ENCODE measurements at regions of chr12 and their contacts with region 1.

Region 1: GRCh38 chr12:76790564-76791552 is 26.9 kb downstream of the ZDHHC17 start:
- DNase-seq: no peak
- H3K4me3 Mint-ChIP-seq: no peak overlapping the region
- H3K27ac Mint-ChIP-seq: no peak overlapping the region
- H3K4me1 Mint-ChIP-seq: peaks cover 15% of the 10 kb centered on the region
- H3K27me3 Mint-ChIP-seq: no peaks in the 10 kb centered on the region

Region 2: GRCh38 chr12:76480796-76481195 is 310.1 kb before region 1 on chr12:
- CTCF ChIA-PET with region 1: no interaction called
- intact Hi-C with region 1: no loop called
- DNase-seq: no peak
- H3K4me3 Mint-ChIP-seq: no peak overlapping the region
- H3K27ac Mint-ChIP-seq: no peak overlapping the region
- H3K4me1 Mint-ChIP-seq: peaks cover 9% of the 10 kb centered on the region
- H3K27me3 Mint-ChIP-seq: no peaks in the 10 kb centered on the region

Region 3: DNA sequence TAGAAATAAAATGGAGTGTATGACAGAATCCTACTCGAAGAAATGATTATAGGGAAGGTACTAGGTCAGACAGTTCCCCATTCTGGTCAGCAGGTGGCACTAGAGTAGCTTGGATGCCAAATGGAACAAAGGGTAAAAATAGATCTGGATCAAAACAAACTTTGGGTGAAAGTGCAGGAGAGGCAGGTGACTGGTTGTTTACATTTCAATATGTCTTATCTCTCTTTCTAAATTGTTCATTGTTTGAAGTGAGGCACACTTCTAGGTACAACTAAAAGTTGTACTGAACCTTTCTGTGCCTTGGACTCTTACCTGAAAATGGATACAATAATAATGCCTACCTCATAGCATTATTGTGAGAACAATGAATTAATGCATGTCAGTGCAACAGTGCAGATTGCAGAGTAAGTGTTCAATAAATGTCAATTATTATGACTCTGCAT is 169.3 kb before region 1 on chr12:
- CTCF ChIA-PET with region 1: interaction called, 70 read pairs
- intact Hi-C with region 1: loop called (anchors 1 kb)
- DNase-seq: peak; percentile 83
- H3K4me3 Mint-ChIP-seq: no peak overlapping the region
- H3K27ac Mint-ChIP-seq: no peak overlapping the region
- H3K4me1 Mint-ChIP-seq: peaks cover 4% of the 10 kb centered on the region
- H3K27me3 Mint-ChIP-seq: no peaks in the 10 kb centered on the region

Region 4: DNA sequence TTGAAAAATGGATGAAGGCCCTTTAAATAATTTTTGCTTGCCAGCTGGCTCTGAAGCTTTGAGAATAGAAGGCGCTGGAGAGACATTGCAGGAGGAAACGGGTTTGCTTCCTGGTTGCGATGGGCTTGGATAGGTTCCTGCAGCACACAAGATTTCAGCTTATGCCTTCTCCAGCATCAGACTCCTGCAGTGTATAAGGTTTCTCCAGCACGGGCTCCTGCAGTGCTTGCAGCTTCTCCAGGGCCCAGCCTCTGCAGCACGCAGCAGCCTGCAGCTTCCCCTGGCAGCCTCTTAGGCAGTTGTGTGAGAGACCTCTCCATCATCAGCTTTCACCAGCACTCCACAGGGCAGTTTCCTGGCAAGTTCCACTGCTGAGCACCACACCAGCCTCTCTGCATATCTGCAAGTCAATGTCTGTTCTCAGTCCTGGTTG is 105.6 kb before region 1 on chr12:
- CTCF ChIA-PET with region 1: interaction called, 5 read pairs
- intact Hi-C with region 1: loop called (anchors 1 kb)
- DNase-seq: no peak
- H3K4me3 Mint-ChIP-seq: no peak overlapping the region
- H3K27ac Mint-ChIP-seq: no peak overlapping the region
- H3K4me1 Mint-ChIP-seq: peaks cover 6% of the 10 kb centered on the region
- H3K27me3 Mint-ChIP-seq: no peaks in the 10 kb centered on the region

Region 5: GRCh38 chr12:76763743-76764675 is 26.8 kb before region 1 on chr12 and contains the start of gene ZDHHC17:
- CTCF ChIA-PET with region 1: interaction called, 13 read pairs
- intact Hi-C with region 1: no loop called
- DNase-seq: peak; percentile 88
- H3K4me3 Mint-ChIP-seq: peak within 1 kb of the TSS; percentile 98
- H3K27ac Mint-ChIP-seq: peak within 1 kb of the TSS; percentile 91
- H3K4me1 Mint-ChIP-seq: peaks cover 38% of the 10 kb centered on the region
- H3K27me3 Mint-ChIP-seq: no peaks in the 10 kb centered on the region
- total RNA-seq, gene ZDHHC17: 19.1 to 22.2 TPM

Region 6: GRCh38 chr12:76777765-76778216 is 13.1 kb before region 1 on chr12:
- CTCF ChIA-PET with region 1: interaction called, 11 read pairs
- intact Hi-C with region 1: no loop called
- DNase-seq: peak; percentile 23
- H3K4me3 Mint-ChIP-seq: no peak overlapping the region
- H3K27ac Mint-ChIP-seq: peak overlapping the region; percentile 60
- H3K4me1 Mint-ChIP-seq: peaks cover 68% of the 10 kb centered on the region
- H3K27me3 Mint-ChIP-seq: no peaks in the 10 kb centered on the region

Region 7: DNA sequence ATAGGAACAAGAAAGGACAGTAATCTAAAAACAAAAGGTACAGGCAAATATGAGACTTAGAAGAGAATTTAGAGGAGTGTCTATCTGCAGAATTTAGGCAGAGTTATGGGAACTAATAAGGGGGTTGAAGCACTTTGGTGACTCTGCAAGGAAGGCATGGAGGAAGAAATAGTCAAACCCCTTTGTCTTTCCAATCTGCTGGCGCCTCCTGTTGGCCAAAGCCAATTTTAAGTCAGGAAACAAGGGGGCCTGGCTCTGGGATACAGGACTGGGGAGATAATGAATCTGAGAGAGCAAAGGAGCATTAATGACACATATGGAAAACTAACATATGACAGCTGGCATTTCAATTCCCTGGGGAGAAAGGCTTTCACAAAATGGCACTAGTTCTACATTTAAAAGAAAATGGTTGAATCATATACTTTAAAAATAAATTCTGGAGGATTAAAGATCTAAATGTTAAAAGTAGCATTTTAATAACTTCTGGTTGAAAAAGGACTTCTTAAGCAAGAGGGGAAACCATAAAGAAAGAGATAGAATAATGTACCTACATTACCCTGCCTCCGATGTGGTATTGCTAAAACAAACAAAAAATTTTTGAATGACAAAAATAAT is 136.4 kb after region 1 on chr12:
- CTCF ChIA-PET with region 1: no interaction called
- intact Hi-C with region 1: loop called (anchors 5 kb)
- DNase-seq: peak; percentile 70
- H3K4me3 Mint-ChIP-seq: no peak overlapping the region
- H3K27ac Mint-ChIP-seq: no peak overlapping the region
- H3K4me1 Mint-ChIP-seq: no peaks in the 10 kb centered on the region
- H3K27me3 Mint-ChIP-seq: peaks cover 6% of the 10 kb centered on the region

Region 8: GRCh38 chr12:77010691-77011548 is 220.1 kb after region 1 on chr12:
- CTCF ChIA-PET with region 1: interaction called, 8 read pairs
- intact Hi-C with region 1: loop called (anchors 1 kb)
- DNase-seq: peak; percentile 84
- H3K4me3 Mint-ChIP-seq: no peak overlapping the region
- H3K27ac Mint-ChIP-seq: no peak overlapping the region
- H3K4me1 Mint-ChIP-seq: peaks cover 5% of the 10 kb centered on the region
- H3K27me3 Mint-ChIP-seq: peaks cover 16% of the 10 kb centered on the region